Left cardiac atrium (tissue), 4 donors: ENCODE measurements at regions of chr10 and their contacts with region 1.

Region 1: GRCh38 chr10:12710594-12711349 is 290.7 kb downstream of the CCDC3 start:
- DNase-seq: peak; percentile 75
- ATAC-seq: peak; percentile 52 to 66

Region 2: DNA sequence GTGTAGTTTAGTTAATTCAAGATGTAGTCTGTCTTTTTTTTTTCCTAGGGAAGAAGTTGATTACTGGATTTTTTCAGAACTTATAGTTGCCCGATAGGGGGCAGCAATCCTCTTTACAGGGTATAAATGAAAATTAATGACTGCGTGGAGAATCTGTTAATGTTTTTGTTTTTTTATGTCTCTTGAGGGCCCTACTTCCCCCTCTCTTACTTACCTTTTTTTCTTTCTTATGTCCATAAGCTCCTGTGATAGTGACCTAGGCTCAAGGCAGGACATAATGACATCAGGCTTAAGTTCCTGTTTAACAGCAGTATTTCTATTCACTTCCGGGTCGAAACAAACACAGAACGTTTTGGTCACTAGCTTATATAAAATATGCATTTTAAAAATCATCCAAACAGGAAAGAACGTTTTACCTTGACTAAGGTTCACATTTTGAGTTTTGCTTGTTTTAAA is 496.0 kb before region 1 on chr10:
- intact Hi-C with region 1: loop called in 1 of 2 experiments (anchors 5 kb)
- DNase-seq: no peak
- ATAC-seq: peak in 1 of 2 donors; percentile 41